PC-9 (cell line): ENCODE measurements at regions of chr10 and their contacts with region 1.

Region 1: GRCh38 chr10:69861251-69862240 is 59.8 kb downstream of the COL13A1 start:
- DNase-seq: peak; percentile 63 to 93
- H3K4me3 ChIP-seq: no peak overlapping the region
- H3K27ac ChIP-seq: peak overlapping the region; percentile 79
- H3K4me1 ChIP-seq: peaks cover 66% of the 10 kb centered on the region
- H3K27me3 ChIP-seq: no peaks in the 10 kb centered on the region
- CTCF ChIP-seq: peak; percentile 58; the same call in 1 of the 2 replicates

Region 2: GRCh38 chr10:69756279-69756678 is 105.3 kb before region 1 on chr10:
- CTCF ChIA-PET with region 1: no interaction called
- POLR2A ChIA-PET with region 1: no interaction called
- intact Hi-C with region 1: no loop called
- DNase-seq: no peak
- H3K4me3 ChIP-seq: no peak overlapping the region
- H3K27ac ChIP-seq: no peak overlapping the region
- H3K4me1 ChIP-seq: no peaks in the 10 kb centered on the region
- H3K27me3 ChIP-seq: peaks cover 39% of the 10 kb centered on the region
- CTCF ChIP-seq: no peak

Region 3: DNA sequence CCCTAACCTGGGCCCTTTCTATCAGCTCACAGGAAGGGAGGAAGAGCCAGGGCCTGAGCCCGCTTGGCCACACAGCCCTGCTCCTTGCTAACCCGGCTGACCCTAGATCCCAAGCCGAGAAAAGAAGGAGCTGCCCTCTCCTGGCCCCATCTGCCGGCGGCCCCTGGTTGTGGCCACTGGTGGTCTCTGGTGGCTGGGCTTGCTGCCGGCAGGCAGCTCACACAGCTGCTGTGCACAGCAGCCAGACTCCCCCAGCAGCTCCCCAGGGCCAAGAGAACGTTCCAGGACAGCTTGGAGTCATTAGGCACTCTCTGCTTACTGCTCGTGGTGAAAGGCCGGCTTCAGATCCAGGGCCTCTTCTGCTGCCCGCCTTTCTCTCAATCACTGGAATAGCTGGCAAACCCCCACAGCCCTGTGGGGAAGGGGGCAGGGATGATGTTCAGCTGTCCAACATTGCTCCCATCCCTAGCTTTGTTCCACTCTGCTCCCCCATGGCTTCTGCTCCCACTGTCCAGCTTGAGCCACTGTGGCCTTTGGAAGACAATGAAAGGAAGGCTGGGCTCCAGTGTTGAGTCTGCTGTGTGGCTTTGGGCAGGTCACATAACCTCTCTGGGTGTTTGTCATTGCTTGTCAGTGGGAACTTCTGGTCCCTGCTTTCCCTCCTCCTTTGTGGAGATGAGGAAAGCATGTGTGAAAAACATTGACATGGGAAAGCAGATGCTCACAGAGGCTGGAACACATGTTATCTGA is 95.2 kb before region 1 on chr10:
- CTCF ChIA-PET with region 1: no interaction called
- POLR2A ChIA-PET with region 1: no interaction called
- intact Hi-C with region 1: no loop called
- DNase-seq: no peak
- H3K4me3 ChIP-seq: no peak overlapping the region
- H3K27ac ChIP-seq: no peak overlapping the region
- H3K4me1 ChIP-seq: peaks cover 14% of the 10 kb centered on the region
- H3K27me3 ChIP-seq: peaks cover 7% of the 10 kb centered on the region; the same call in 1 of the 2 replicates
- CTCF ChIP-seq: no peak

Region 4: GRCh38 chr10:69800109-69800508 is 61.4 kb before region 1 on chr10:
- CTCF ChIA-PET with region 1: no interaction called
- POLR2A ChIA-PET with region 1: no interaction called
- intact Hi-C with region 1: loop called (anchors 5 kb)
- DNase-seq: peak; percentile 48 to 49
- H3K4me3 ChIP-seq: no peak overlapping the region
- H3K27ac ChIP-seq: no peak overlapping the region
- H3K4me1 ChIP-seq: peaks cover 32% of the 10 kb centered on the region; the same call in 1 of the 2 replicates
- H3K27me3 ChIP-seq: no peaks in the 10 kb centered on the region
- CTCF ChIP-seq: peak; percentile 82

Region 5: DNA sequence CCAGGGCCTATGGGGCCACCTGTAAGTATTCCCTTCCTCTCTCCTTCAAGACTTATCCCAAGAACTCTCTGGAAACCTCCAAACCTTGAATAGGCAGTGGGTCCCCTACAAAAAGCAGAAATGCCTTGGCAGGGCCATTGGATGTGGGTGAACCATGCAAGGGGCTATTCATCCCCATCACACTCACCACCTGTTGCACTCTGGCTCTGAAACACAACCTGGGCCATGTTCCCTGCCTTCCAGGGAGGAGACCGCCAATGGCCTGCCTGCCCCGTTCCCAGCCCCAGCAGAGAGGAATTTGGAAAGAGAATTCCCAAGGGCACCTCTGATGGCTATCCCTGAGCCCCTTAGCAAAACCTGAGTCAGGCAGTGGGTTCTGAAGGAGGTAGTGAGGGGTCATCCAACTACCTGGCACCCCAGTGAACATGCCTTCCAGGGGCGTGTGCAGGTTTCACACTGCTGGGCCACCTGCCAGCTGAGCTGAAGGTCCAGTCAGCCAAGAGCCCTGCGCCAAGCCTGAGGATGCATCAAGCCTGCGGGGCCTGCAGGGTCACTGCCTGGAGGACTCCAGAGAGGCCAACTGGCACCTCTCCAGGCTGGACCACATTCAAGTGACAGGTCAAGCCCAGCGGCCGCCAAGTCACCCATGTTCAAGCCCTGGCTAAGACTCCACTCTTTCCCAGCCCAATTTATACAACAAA is 41.4 kb after region 1 on chr10:
- CTCF ChIA-PET with region 1: no interaction called
- POLR2A ChIA-PET with region 1: interaction called, 5 read pairs
- intact Hi-C with region 1: loop called (anchors 1 kb)
- DNase-seq: peak; percentile 74 to 86
- H3K4me3 ChIP-seq: no peak overlapping the region
- H3K27ac ChIP-seq: no peak overlapping the region
- H3K4me1 ChIP-seq: peaks cover 19% of the 10 kb centered on the region
- H3K27me3 ChIP-seq: no peaks in the 10 kb centered on the region
- CTCF ChIP-seq: no peak